ENCODE measurements at regions of chr17 and their contacts with region 1.

Region 1: DNA sequence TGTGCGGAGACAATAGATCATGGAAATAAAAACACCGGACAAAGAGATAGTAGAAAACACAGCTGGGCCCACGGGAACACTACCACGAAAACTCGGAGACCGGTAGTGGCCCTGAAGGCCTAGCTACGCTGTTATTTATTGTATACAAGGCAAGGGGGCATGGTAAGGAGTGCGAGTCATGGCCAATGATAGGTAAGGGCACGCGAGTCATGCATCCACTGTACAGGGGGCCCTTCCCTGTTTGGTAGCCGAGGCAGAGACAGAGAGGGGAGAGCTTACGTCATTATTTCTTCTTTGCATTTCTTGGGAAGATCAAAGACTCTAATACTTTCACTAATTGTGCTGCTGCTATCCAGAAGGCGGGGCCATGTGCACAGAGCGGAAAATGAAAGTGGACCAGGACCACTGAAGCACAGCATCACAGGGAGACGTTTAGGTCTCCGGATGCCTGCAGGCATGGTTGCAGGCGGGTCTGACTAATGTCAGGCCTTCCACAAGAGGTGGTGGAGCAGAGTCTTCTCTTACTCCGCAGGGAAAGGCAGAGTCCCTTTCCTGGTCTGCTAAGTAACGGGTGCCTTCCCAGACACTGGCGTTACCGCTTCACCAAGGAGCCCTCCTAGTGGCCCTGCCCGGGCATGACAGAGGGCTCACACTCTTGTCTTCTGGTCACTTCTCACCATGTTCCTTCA is 74.4 kb upstream of the ARL4D start:
- DNase-seq: no peak
- CTCF ChIP-seq: no peak

Region 2: DNA sequence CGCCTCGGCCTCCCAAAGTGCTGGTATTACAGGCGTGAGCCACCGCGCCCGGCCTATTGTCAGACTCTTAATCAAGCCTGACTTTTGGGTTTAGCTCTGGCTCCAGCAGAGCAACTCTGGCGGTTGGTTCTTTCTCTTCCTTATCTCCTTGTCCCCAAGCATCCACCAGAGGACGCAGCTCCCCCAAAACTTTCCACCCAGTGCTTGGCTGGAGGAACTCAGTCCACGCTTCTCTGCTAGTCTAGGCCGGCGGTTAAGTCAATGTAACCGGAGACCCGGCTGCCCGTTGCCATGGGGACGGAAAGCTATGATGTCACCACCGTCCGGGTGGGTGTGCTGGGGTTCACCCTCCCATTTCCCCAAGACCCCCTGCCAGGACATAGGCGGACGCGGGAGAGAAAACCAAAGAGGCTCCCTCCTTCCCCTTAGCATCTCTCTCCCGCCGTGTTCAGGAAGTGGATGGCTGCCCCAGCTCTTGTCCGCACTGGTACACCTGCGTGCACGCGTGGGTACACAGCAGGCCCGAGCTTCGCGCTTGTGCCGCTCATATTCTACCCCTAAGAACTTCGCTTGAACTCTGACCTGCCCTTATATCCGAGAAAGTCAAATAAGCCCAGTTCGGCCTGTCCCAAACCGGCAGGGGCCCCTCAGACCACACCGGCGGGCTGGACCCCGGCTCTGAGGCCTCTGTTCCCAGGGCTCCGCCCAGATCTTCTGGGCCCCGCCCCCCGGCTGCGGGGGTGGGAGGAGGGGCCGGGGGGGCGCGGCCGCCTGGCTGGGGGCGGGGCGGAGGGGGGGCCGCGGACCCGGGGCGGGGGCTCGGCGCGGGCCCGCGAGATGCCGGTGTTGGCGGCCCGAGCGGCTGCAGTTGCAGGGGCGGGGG is 299.7 kb before region 1 on chr17 and contains the start of gene RND2:
- in situ Hi-C with region 1: loop called (anchors 25 kb)
- DNase-seq: peak; percentile 93
- CTCF ChIP-seq: peak; percentile 64

Region 3: DNA sequence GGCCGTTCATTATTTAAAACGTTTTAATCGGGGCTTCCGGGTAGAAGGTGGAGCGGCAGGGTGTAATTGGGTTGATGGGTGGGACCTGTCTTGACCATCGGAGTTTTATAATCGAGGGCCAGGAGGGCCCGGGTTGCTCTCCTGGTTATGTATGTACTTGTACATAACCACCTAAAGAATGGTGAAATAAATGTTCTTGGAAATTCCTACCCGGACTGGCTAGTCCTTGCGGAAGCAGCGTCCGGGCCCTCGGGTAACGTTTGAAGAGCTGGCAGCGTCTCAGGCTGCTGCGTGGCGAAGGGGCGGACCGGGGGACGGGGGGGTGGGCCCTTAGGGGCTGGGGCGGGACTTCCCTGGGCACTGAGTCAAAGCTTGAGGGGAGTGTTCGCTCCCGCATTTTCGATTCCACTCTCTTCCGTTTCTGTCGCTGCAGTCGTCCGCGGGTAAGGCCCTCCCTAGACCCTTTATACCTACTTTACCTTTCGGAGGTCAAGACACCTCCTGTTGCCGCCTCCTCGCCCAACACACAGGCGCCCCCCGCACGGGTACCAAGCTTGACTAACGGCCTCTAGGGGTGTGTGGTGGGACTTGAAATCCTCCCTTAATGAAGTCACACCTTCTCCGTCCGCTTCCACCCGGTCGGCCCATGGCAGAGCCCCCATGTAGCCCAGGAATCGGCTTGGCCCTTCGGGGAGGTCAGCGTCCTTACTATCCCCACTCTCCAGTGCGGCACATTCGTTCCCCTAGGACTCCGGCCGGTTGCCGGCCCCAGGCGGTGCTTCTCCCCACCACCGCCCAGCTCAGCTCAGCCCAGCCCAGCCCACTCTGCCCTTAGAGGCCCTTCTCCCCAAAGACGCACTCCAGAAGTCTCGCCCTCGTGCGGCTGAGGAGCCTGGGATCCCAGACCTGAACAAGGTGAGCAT is 112.6 kb before region 1 on chr17 and contains the start of gene TMEM106A:
- in situ Hi-C with region 1: loop called (anchors 25 kb)
- DNase-seq: peak; percentile 95
- CTCF ChIP-seq: peak; percentile 11

Region 4: DNA sequence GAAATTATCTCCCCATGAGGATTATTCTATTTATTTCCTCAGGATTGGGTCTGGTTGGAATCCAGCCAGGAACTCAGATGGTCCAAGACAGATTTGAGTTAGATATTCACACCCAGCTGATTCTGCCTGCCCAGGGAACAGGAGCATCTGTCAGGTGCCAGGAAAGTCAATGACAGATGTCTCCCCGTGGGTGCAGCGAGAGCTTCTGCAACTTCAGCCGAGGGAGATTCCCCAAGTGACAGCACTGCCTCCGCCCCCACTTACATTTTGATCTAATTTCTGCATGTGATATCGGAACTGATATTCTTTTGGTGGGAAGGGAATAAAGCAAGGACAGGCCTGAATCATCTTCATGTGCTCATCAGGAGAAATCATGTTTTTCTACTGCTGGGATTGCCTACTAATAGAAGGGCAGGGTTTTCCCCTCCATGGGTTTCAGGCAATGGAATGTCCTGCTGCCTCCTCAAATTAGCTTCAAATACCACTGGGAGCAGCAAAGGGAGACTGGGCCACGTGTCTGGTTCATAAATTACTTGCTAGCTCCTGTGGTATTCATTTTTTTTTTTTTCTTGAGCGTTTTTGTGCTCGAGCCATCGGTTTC is 143.7 kb after region 1 on chr17:
- in situ Hi-C with region 1: no loop called
- DNase-seq: no peak
- CTCF ChIP-seq: no peak

Region 5: DNA sequence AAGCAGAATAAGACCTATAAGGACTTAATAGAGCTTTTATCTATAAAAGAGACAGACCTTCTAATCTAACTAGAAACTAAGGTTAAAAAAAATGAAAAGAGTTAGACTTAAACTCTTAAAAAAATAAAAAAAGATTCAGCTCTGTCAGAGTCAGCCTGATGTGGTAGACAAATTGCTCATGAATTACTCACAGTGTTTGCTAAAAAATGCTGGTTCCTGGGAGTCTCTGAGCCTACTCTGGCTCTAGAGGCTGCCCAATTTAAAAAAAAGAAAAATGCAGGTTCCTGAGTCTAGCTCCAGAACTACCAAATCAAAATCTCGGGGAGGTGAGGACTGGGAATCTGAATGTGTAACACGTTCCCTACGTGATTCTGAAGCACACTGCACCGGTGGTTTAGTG is 416.2 kb after region 1 on chr17:
- in situ Hi-C with region 1: no loop called
- DNase-seq: no peak
- CTCF ChIP-seq: no peak